T-cell (primary cell): ENCODE measurements at regions of chr11 and their contacts with region 1.

Region 1: DNA sequence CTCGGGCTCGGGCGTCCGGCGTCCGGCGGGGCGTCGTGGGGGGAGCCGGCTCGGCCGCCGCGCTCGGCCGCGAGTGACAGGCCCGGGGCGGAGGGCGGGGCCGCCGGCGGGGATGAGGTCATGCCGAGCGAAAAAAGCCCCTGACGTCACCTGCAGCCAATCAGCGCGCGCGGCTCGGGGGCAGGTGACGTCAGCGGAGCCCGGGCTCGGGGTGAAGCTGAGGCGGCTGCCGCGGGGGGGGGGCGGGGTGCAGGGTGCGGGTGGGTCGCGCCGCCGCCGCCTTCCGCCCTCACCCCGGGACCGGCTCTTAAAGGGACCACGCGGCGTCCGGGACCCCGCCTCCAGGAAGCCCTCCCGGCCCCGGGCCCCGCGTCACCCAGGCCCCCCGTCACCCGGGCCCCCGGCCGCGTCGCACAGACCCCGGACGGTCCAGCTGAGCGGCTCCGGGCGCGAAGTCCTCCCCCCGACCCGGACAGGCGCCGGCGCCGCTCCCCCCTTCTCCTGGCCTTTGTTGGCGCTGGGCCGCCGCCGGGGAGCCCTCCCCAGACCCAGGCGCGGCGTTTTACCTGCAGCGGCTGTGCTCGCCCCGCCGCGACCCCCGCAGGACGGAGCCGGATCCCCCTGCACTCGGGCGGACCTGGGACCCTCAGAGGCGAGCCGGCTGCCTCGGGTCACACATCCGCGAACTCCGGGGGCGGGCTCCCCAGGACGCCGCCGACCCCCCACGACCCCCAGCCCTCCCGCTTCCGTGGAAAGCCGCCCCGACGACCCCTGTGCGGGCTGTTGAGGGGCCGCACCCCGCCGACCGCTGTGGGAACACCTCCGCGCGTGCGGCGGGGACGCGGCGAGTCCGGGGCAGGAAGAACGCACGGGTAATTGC is at the start of gene DUSP8:
- DNase-seq: peak; percentile 81 to 99 (median 94)
- ATAC-seq: peak; percentile 60 to 77 (median 66)
- H3K4me3 ChIP-seq: peak within 1 kb of the TSS; percentile 56 to 67
- H3K4me3 Mint-ChIP-seq: peak within 1 kb of the TSS; percentile 73 to 84 (median 79)
- H3K27ac ChIP-seq: peak within 1 kb of the TSS; percentile 89
- H3K27ac Mint-ChIP-seq: peak within 1 kb of the TSS in 1 of 2 donors; percentile 64
- H3K4me1 ChIP-seq: peaks cover 12 to 62% of the 10 kb centered on the region in 2 experiments
- H3K4me1 Mint-ChIP-seq: peaks cover 26 to 30% (median 27%) of the 10 kb centered on the region in 3 donors
- H3K27me3 ChIP-seq: peaks cover 2 to 16% of the 10 kb centered on the region in 2 experiments
- H3K27me3 Mint-ChIP-seq: peaks cover 0 to 1% of the 10 kb centered on the region in 2 donors
- total RNA-seq, gene DUSP8: 5.2 to 64.3 (median 8.7) TPM

Region 2: DNA sequence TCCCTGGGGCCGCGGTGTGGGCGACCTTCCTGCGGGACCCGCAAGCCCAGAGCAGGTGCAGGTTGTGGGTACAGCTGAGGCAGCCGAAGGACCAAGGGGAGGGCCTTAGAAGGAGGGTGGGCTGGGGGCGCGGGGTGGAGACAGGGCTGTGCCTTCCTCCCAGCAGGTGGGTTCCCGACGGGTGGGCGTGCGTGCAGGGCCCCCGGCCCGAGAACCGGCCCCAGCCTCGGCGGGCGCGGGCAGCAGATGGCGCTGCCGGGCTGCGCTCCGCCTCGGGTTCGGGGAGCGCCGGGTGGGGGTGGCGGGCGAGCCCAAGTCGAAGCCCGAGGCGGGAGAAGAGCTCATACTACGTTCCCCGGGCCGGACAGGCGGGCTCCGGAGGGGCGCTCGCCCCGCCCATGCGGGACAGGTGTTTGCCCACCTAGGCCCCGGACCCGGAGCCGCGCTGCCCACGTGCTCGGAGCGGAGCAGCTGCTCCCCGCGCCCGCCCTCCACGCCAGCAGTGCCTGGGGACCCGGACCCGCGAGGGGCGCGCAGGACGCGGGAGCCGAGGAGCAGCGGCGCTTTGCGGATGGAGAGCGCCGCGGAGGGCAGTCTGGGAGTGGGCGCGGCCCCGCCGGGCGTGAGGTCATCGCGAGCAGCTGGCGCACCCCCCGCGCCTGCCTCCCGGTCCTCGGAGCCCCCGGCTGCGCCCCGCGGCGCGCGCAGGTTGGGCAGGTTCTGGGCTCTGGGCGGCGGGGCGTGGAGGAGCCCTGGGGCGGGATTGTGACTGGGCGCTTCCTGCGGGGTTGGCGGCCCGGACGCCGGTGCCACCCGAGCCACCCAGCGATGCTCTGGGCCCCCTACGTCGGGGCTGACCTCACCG is 25.7 kb before region 1 on chr11:
- CTCF ChIA-PET with region 1: interaction called, 8 to 43 read pairs
- POLR2A ChIA-PET with region 1: interaction called in 1 of 2 experiments, 6 read pairs
- DNase-seq: peak in 19 of 35 experiments; percentile 32 to 75 (median 47)
- ATAC-seq: peak; percentile 65 to 76 (median 68)
- H3K4me3 ChIP-seq: peak overlapping the region in 1 of 2 donors; percentile 38
- H3K4me3 Mint-ChIP-seq: peak overlapping the region in 2 of 3 donors; percentile 13 to 56
- H3K27ac ChIP-seq: no peak overlapping the region
- H3K27ac Mint-ChIP-seq: no peak overlapping the region
- H3K4me1 ChIP-seq: peaks cover 2 to 24% of the 10 kb centered on the region in 2 experiments
- H3K4me1 Mint-ChIP-seq: peaks cover 0 to 13% (median 4%) of the 10 kb centered on the region in 3 donors
- H3K27me3 ChIP-seq: peaks cover 0 to 72% of the 10 kb centered on the region in 2 experiments
- H3K27me3 Mint-ChIP-seq: peaks cover 11 to 40% of the 10 kb centered on the region in 2 donors